Left ventricle myocardium inferior (tissue), 1 donor: ENCODE measurements at regions of chr19 and their contacts with region 1.

Region 1: GRCh38 chr19:43446746-43447489 is 18.5 kb downstream of the LYPD3 start:
- DNase-seq: peak; percentile 75
- H3K4me3 ChIP-seq: no peak overlapping the region
- H3K27ac ChIP-seq: no peak overlapping the region
- H3K4me1 ChIP-seq: peaks cover 3% of the 10 kb centered on the region
- H3K27me3 ChIP-seq: no peaks in the 10 kb centered on the region
- CTCF ChIP-seq: peak; percentile 98

Region 2: GRCh38 chr19:43519436-43520088 is 72.6 kb after region 1 on chr19:
- intact Hi-C with region 1: loop called (anchors 2 kb)
- DNase-seq: peak; percentile 70
- H3K4me3 ChIP-seq: no peak overlapping the region
- H3K27ac ChIP-seq: no peak overlapping the region
- H3K4me1 ChIP-seq: peaks cover 3% of the 10 kb centered on the region
- H3K27me3 ChIP-seq: no peaks in the 10 kb centered on the region
- CTCF ChIP-seq: peak; percentile 91